ENCODE measurements at regions of chr5 and their contacts with region 1.

Region 1: DNA sequence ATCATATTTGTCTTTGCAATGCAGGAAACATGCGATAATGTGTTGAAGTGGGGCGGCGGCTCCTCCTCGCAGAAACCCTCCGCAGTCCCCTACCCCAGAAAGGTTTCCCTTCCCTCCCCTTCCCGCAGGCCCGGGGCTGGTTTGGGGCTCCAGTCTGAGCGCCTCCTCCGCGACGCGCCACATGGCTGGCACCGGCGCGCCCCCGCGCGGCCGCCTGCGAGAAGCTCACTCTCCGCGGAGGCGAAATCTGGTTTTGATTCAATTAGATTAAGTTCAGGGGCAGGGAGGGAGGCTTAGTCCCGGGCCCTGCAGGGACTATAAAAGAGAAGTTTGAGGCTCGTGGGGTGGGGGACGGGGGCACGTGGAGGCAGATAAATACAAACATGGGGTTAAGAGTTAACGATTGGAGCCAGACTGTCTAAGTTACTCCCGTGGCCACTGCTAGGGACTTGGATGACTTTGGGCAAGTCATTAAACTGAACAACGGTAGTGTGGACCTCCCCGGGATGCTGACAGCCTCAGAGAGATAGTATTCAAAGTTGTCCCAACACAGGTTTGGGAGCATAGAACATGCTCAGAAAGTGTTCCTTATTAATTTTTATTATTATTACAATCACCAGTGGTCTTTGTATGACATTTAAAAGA is 69.4 kb downstream of the MSX2 start:
- DNase-seq: peak; percentile 45
- ATAC-seq: peak; percentile 38 to 84

Region 2: GRCh38 chr5:174418928-174419796 is 374.6 kb before region 1 on chr5:
- intact Hi-C with region 1: loop called (anchors 1 to 5 kb)
- DNase-seq: peak; percentile 90
- ATAC-seq: peak; percentile 96 to 97

Region 3: DNA sequence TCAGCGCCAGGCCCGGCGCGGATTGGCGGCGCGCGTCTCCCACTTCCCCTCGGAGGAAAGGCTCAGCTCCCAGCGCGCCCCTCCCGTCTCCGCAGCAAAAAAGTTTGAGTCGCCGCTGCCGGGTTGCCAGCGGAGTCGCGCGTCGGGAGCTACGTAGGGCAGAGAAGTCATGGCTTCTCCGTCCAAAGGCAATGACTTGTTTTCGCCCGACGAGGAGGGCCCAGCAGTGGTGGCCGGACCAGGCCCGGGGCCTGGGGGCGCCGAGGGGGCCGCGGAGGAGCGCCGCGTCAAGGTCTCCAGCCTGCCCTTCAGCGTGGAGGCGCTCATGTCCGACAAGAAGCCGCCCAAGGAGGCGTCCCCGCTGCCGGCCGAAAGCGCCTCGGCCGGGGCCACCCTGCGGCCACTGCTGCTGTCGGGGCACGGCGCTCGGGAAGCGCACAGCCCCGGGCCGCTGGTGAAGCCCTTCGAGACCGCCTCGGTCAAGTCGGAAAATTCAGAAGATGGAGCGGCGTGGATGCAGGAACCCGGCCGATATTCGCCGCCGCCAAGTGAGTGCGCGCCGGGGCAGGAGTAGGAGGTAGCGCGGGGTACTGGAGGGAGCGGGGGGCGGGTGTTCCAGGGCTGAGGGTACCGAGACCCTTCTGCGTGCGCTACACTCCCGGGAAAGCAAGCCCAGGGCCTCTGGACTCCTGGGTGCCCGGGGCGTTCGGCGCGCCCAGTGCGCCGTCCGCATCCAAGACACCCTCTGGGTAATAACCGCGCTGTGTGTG is 69.1 kb before region 1 on chr5 and contains the start of gene MSX2:
- intact Hi-C with region 1: no loop called
- DNase-seq: peak; percentile 91
- ATAC-seq: peak; percentile 98 to 99
- total RNA-seq, gene MSX2: 1.8 to 2.8 TPM

Region 4: DNA sequence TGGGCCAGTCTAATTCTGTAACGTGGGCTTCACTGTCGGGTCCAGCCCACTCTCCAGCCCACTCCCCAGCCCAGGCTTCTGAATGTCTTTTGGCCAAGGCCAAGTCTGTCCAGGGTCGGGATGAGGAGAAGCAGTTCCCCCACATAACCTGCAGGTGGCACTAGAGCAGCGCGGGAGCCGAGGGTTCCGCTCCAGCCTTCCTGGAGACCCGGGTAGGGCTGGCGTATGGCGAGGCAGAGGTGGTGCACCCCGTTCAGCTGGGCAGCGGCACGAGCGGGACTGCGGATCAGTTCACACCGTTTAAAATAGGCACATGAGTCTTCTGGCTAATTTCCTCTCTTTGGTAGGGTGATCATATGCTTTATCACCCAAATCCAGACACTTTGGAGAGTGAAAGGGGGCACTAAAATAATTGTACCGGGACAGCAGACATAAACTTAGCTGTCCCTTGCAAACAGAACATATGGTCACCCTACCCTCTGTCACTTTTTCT is 116.5 kb after region 1 on chr5:
- intact Hi-C with region 1: no loop called
- DNase-seq: peak; percentile 66
- ATAC-seq: peak; percentile 92 to 97

Region 5: GRCh38 chr5:175159956-175160355 is 366.1 kb after region 1 on chr5:
- intact Hi-C with region 1: no loop called
- DNase-seq: no peak
- ATAC-seq: no peak

Region 6: GRCh38 chr5:175878544-175879327 is 1084.9 kb after region 1 on chr5:
- intact Hi-C with region 1: no loop called
- DNase-seq: no peak
- ATAC-seq: no peak

Measured in left cardiac atrium (tissue), 4 donors.